BJ (cell line): ENCODE measurements at regions of chr4 and their contacts with region 1.

Region 1: GRCh38 chr4:89226665-89227574 is 80.7 kb downstream of the GPRIN3 start:
- DNase-seq: no peak
- H3K4me3 ChIP-seq: no peak overlapping the region
- H3K27me3 ChIP-seq: no peaks in the 10 kb centered on the region
- CTCF ChIP-seq: peak; percentile 80

Region 2: GRCh38 chr4:89213062-89213701 is 13.7 kb before region 1 on chr4:
- CTCF ChIA-PET with region 1: interaction called, 27 read pairs
- POLR2A ChIA-PET with region 1: no interaction called
- DNase-seq: no peak
- H3K4me3 ChIP-seq: no peak overlapping the region
- H3K27me3 ChIP-seq: no peaks in the 10 kb centered on the region
- CTCF ChIP-seq: no peak

Region 3: DNA sequence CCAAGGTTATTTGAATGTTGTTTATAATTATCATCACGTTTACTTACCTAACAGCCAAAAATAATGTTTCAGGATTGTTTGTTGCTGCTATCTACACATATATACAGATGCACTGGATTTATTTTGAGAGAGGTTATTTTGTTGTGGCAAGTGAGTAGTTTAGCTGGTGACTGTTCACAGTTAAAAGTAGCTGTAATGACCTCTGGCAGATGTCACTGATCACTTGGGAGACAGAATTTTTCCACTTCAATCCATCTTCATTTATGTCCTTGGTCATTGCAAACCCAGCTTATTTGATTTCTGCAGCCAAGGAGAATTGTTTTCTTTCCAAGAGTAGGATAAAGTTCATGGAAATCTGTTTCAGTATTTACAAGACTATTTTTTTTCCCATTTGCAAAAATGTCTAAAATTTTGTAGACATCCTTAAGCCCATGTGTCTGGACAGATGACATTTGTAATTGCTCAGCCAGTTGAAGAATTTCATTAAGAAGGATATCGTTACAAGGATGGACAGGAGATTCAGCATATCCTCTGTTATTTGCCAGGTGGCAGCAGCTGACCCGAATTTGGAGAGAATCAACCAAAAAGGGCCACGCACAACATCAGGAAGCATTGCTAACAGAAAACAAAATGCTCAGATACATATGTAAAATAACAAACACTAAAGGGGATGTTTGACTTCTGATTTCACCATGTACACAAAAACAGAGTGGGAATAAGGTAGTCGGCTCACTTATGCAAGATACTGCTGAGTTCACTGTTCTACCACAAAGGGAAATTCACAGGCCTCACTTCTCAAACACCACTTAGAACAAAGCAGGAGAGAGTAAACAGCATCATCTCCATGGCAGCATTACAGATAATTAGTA is 16.2 kb after region 1 on chr4:
- CTCF ChIA-PET with region 1: interaction called, 15 read pairs
- POLR2A ChIA-PET with region 1: no interaction called
- DNase-seq: no peak
- H3K4me3 ChIP-seq: no peak overlapping the region
- H3K27me3 ChIP-seq: 0 out of 2 replicates have a peak, but pooled peaks cover 2% of the 10 kb centered on the region
- CTCF ChIP-seq: no peak

Region 4: GRCh38 chr4:89254847-89255246 is 27.9 kb after region 1 on chr4:
- CTCF ChIA-PET with region 1: interaction called, 13 read pairs
- POLR2A ChIA-PET with region 1: no interaction called
- DNase-seq: no peak
- H3K4me3 ChIP-seq: no peak overlapping the region
- H3K27me3 ChIP-seq: no peaks in the 10 kb centered on the region
- CTCF ChIP-seq: peak; percentile 76

Region 5: DNA sequence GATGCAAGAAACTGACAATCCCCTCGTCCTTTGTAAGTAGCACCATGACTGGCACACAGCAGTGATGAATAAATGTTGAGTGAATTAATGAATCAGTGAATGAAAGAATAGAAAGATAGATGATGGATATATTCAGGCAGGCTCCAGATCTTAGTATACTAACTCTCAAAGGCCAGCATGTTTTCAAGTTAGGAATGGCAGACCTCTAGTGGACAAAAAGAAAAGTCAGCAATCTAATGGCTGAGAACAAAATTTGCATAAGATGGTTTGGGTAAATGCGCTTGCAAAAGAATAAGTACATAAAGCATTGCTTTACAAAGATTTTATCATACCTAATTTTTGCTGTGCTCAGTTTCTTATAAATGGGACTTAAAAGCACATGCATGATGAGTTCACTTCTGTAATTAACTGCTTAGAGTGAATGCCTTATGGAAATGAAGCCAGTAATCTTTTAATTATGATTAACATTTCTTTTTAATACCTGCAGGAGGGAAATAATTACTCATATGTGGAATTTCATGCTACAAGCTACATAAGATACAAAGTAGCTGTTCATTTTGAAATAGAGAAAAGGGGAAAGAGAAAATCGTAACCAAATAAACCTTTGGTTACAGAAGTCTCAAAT is 207.6 kb after region 1 on chr4:
- CTCF ChIA-PET with region 1: interaction called, 39 read pairs
- POLR2A ChIA-PET with region 1: no interaction called
- DNase-seq: no peak
- H3K4me3 ChIP-seq: no peak overlapping the region
- H3K27me3 ChIP-seq: peaks cover 2% of the 10 kb centered on the region
- CTCF ChIP-seq: peak; percentile 77